Activated CD8-positive, alpha-beta T cell treated with anti-CD3 and anti-CD28 coated beads for 36 hours (primary cell): ENCODE measurements at regions of chr9 and their contacts with region 1.

Region 1: GRCh38 chr9:107340920-107341632 is 58.0 kb downstream of the RAD23B start:
- DNase-seq: peak; percentile 86
- ATAC-seq: peak; percentile 84
- H3K4me3 Mint-ChIP-seq: no peak overlapping the region
- H3K27ac Mint-ChIP-seq: peak overlapping the region; percentile 69
- H3K4me1 Mint-ChIP-seq: peaks cover 15% of the 10 kb centered on the region
- H3K27me3 Mint-ChIP-seq: no peaks in the 10 kb centered on the region
- CTCF ChIP-seq: peak; percentile 89

Region 2: GRCh38 chr9:107137495-107138202 is 203.4 kb before region 1 on chr9:
- CTCF ChIA-PET with region 1: interaction called, 15 read pairs
- POLR2A ChIA-PET with region 1: no interaction called
- intact Hi-C with region 1: no loop called
- DNase-seq: peak; percentile 17
- ATAC-seq: no peak
- H3K4me3 Mint-ChIP-seq: no peak overlapping the region
- H3K27ac Mint-ChIP-seq: no peak overlapping the region
- H3K4me1 Mint-ChIP-seq: no peaks in the 10 kb centered on the region
- H3K27me3 Mint-ChIP-seq: peaks cover 10% of the 10 kb centered on the region
- CTCF ChIP-seq: peak; percentile 62

Region 3: GRCh38 chr9:107243751-107244150 is 97.3 kb before region 1 on chr9:
- CTCF ChIA-PET with region 1: interaction called, 32 read pairs
- POLR2A ChIA-PET with region 1: no interaction called
- intact Hi-C with region 1: no loop called
- DNase-seq: peak; percentile 80
- ATAC-seq: peak; percentile 86
- H3K4me3 Mint-ChIP-seq: no peak overlapping the region
- H3K27ac Mint-ChIP-seq: peak overlapping the region; percentile 82
- H3K4me1 Mint-ChIP-seq: peaks cover 40% of the 10 kb centered on the region
- H3K27me3 Mint-ChIP-seq: peaks cover under 1% of the 10 kb centered on the region
- CTCF ChIP-seq: no peak

Region 4: GRCh38 chr9:107299437-107299836 is 41.6 kb before region 1 on chr9:
- CTCF ChIA-PET with region 1: interaction called, 29 read pairs
- POLR2A ChIA-PET with region 1: interaction called, 3 read pairs
- intact Hi-C with region 1: no loop called
- DNase-seq: no peak
- ATAC-seq: peak; percentile 71
- H3K4me3 Mint-ChIP-seq: no peak overlapping the region
- H3K27ac Mint-ChIP-seq: peak overlapping the region; percentile 67
- H3K4me1 Mint-ChIP-seq: peaks cover 41% of the 10 kb centered on the region
- H3K27me3 Mint-ChIP-seq: no peaks in the 10 kb centered on the region
- CTCF ChIP-seq: peak; percentile 41

Region 5: DNA sequence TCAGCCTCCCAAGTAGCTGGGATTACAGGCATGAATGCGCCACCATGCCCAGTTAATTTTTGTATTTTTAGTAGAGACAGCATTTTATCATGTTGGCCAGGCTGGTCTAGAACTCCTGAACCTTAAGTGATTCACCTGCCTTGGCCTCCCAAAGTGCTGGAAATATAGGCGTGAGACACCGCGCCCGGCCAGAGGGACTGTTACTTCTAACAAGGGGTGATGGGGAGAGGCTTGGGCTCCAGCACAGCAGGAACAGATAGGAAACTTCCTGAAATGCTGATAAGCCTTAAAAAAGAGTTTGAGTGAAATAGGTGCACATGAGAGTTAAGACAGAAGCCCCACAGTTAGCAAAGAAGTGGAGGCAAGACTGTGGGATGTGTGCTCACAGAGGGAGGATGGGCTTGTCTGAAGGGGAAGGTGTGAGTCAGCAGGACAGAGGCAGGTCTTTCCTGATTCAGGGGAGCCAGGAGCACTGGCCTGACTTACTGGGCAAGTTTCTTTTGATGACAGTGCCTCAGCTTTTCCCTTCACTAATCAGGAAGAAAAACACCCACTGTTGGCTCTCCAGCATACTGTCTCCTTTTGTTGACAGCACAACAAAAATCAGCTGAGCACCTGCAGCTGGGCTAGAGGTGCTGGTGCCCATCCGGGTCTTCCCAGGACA is 10.4 kb after region 1 on chr9:
- CTCF ChIA-PET with region 1: interaction called, 27 read pairs
- POLR2A ChIA-PET with region 1: interaction called, 3 read pairs
- intact Hi-C with region 1: no loop called
- DNase-seq: no peak
- ATAC-seq: no peak
- H3K4me3 Mint-ChIP-seq: no peak overlapping the region
- H3K27ac Mint-ChIP-seq: no peak overlapping the region
- H3K4me1 Mint-ChIP-seq: no peaks in the 10 kb centered on the region
- H3K27me3 Mint-ChIP-seq: peaks cover 14% of the 10 kb centered on the region
- CTCF ChIP-seq: no peak

Region 6: GRCh38 chr9:107404161-107404560 is 63.1 kb after region 1 on chr9:
- CTCF ChIA-PET with region 1: no interaction called
- POLR2A ChIA-PET with region 1: no interaction called
- intact Hi-C with region 1: no loop called
- DNase-seq: no peak
- ATAC-seq: no peak
- H3K4me3 Mint-ChIP-seq: no peak overlapping the region
- H3K27ac Mint-ChIP-seq: no peak overlapping the region
- H3K4me1 Mint-ChIP-seq: no peaks in the 10 kb centered on the region
- H3K27me3 Mint-ChIP-seq: peaks cover 3% of the 10 kb centered on the region
- CTCF ChIP-seq: no peak

Region 7: DNA sequence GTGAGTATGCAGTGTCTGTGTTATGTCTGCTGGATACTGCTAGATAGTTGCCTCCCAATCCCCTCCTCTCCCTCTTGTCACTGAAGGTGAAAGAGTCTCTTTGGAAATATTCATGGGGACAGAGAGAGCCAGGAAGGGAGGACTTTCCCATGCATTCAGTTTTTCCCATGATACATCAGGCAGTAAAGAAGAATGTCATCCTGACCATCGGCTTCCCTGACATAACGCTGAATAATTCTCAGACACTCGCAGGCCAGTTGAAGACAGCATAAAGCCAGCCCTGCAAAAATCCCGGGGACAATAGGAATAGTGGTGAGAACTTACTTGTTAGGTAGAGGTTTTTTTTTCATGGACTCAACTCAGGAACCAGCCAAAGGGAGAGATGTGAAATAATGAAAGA is 90.4 kb after region 1 on chr9:
- CTCF ChIA-PET with region 1: no interaction called
- POLR2A ChIA-PET with region 1: no interaction called
- intact Hi-C with region 1: no loop called
- DNase-seq: no peak
- ATAC-seq: no peak
- H3K4me3 Mint-ChIP-seq: no peak overlapping the region
- H3K27ac Mint-ChIP-seq: no peak overlapping the region
- H3K4me1 Mint-ChIP-seq: no peaks in the 10 kb centered on the region
- H3K27me3 Mint-ChIP-seq: peaks cover 8% of the 10 kb centered on the region
- CTCF ChIP-seq: no peak

Region 8: GRCh38 chr9:107491081-107492057 is 150.3 kb after region 1 on chr9:
- CTCF ChIA-PET with region 1: no interaction called
- POLR2A ChIA-PET with region 1: no interaction called
- intact Hi-C with region 1: no loop called
- DNase-seq: no peak
- ATAC-seq: no peak
- H3K4me3 Mint-ChIP-seq: peak overlapping the region; percentile 27
- H3K27ac Mint-ChIP-seq: no peak overlapping the region
- H3K4me1 Mint-ChIP-seq: peaks cover 8% of the 10 kb centered on the region
- H3K27me3 Mint-ChIP-seq: peaks cover 57% of the 10 kb centered on the region
- CTCF ChIP-seq: no peak